Body of pancreas (tissue), 4 donors: ENCODE measurements at regions of chr2 and their contacts with region 1.

Region 1: DNA sequence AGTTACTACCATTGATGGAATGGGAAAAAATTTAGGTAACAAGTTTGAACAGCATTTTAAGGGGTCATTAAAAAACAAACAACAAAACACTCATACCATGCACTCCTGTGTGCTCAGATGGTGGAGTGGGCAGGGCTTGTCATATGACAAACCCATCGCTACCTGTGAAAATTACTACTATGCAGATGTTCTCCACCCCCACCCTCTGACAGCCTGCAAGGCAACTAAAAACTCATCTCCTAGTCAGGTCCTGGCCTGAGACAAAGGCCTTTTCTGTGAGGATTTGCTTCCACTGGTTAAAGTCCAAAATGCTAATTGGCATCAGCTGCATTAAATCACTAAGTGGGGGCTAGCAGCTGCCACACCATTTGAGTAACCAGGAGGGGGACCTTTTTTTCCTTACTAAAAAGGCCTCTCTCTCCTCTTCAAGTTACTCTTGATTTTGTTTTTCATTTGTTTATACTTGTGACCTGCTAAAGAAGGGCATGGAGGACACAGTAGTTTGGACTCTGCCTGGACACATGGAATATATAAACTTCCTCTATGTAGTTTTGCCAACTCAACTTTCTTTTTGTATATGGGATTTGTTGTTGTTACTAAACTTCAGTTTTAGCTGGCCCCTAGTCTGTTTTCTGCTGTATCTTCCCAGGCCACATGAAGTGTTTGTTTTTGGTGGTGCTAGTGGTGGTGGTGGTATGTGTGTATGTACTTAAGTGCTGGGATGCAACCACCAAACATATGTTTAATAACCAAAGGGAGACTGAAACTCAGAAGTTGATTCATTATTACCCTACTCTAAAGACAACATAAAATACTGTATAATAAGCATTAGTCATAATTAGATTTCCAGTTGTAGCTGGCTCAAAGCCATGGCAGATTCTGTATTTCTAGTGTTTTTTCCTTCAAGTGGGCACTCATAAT is 121.3 kb downstream of the MAP4K4 start:
- DNase-seq: no peak
- ATAC-seq: no peak
- H3K4me3 ChIP-seq: no peak overlapping the region
- H3K27ac ChIP-seq: no peak overlapping the region
- H3K4me1 ChIP-seq: peaks cover 35% of the 10 kb centered on the region
- H3K27me3 ChIP-seq: no peaks in the 10 kb centered on the region
- CTCF ChIP-seq: no peak
- POLR2A ChIP-seq: no peak

Region 2: DNA sequence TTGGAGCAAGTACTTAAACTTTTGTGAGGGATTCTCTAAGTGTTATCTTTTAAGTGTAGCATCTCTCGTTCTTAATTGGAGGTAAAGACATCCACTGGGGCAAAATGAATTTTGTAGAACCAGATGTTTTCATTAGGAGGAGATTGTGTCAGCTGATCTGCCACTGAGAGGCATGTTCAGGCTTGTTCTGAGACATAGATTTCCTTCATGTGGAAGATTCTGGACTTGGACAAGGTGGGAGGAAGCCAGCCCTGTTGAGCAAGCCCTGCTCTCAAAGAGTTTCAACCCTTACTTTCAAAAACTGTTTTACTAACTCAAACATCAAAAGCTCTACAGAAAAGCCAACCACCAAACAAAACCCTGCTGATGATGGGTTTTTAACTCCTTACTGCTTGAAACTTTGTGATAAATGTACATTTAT is 114.7 kb before region 1 on chr2:
- intact Hi-C with region 1: loop called (anchors 10 kb)
- DNase-seq: peak in 1 of 4 donors; percentile 24
- ATAC-seq: no peak
- H3K4me3 ChIP-seq: no peak overlapping the region
- H3K27ac ChIP-seq: no peak overlapping the region
- H3K4me1 ChIP-seq: peaks cover 48% of the 10 kb centered on the region
- H3K27me3 ChIP-seq: no peaks in the 10 kb centered on the region
- CTCF ChIP-seq: no peak
- POLR2A ChIP-seq: no peak